CD8-positive, alpha-beta T cell (primary cell): ENCODE measurements at regions of chr17 and their contacts with region 1.

Region 1: GRCh38 chr17:4263282-4264215 is at the start of gene ANKFY1:
- DNase-seq: peak; percentile 95 to 98 (median 97)
- ATAC-seq: peak; percentile 95
- H3K4me3 ChIP-seq: peak within 1 kb of the TSS; percentile 86 to 99
- H3K4me3 Mint-ChIP-seq: peak within 1 kb of the TSS; percentile 90
- H3K27ac ChIP-seq: peak within 1 kb of the TSS; percentile 81 to 88
- H3K27ac Mint-ChIP-seq: peak within 1 kb of the TSS; percentile 91
- H3K4me1 ChIP-seq: peaks cover 21% of the 10 kb centered on the region
- H3K4me1 Mint-ChIP-seq: peaks cover 40% of the 10 kb centered on the region
- H3K27me3 ChIP-seq: no peaks in the 10 kb centered on the region
- H3K27me3 Mint-ChIP-seq: no peaks in the 10 kb centered on the region
- CTCF ChIP-seq: no peak
- total RNA-seq, gene ANKFY1: 26.2 to 28.6 TPM

Region 2: DNA sequence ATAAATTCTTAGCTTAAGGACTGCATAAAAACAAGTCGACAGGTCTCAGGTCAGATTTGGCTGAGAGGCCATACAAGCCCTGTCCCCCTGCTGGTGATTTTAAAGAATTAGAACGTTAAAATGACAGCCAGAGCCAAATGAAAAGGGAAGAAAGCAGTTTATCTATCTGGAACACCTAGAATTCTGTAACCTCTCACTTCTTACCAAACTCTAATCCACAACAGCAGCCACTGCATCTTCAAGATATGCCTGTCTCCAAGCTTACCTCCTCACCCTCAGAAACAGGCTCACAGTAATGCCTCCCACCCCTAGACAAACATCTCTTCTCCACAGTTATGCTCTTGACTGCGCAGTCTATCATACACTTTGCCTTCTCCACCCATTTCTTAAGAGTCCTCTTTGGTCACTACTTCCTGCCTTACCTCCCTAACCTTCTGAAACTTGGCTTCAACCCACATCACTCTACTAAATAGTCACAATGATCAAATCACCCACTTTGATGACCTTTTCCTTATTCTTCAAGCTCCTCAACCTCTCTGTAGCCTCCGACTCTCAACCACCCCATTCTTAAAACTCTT is 14.0 kb before region 1 on chr17:
- CTCF ChIA-PET with region 1: interaction called, 12 read pairs
- POLR2A ChIA-PET with region 1: interaction called, 9 read pairs
- intact Hi-C with region 1: no loop called
- DNase-seq: peak in 2 of 9 experiments; percentile 43 to 53
- ATAC-seq: peak; percentile 42
- H3K4me3 ChIP-seq: no peak overlapping the region
- H3K4me3 Mint-ChIP-seq: no peak overlapping the region
- H3K27ac ChIP-seq: no peak overlapping the region
- H3K27ac Mint-ChIP-seq: peak overlapping the region; percentile 7
- H3K4me1 ChIP-seq: peaks cover 6% of the 10 kb centered on the region
- H3K4me1 Mint-ChIP-seq: peaks cover 56% of the 10 kb centered on the region
- H3K27me3 ChIP-seq: no peaks in the 10 kb centered on the region
- H3K27me3 Mint-ChIP-seq: no peaks in the 10 kb centered on the region
- CTCF ChIP-seq: peak; percentile 58

Region 3: GRCh38 chr17:4554997-4555799 is 291.6 kb after region 1 on chr17 and contains the start of gene MYBBP1A:
- CTCF ChIA-PET with region 1: no interaction called
- POLR2A ChIA-PET with region 1: no interaction called
- intact Hi-C with region 1: loop called in 1 of 2 experiments (anchors 5 kb)
- DNase-seq: peak; percentile 91 to 99 (median 98)
- ATAC-seq: peak; percentile 93
- H3K4me3 ChIP-seq: peak within 1 kb of the TSS; percentile 80 to 100
- H3K4me3 Mint-ChIP-seq: peak within 1 kb of the TSS; percentile 94
- H3K27ac ChIP-seq: peak within 1 kb of the TSS; percentile 77 to 88
- H3K27ac Mint-ChIP-seq: peak within 1 kb of the TSS; percentile 95
- H3K4me1 ChIP-seq: peaks cover 26% of the 10 kb centered on the region
- H3K4me1 Mint-ChIP-seq: peaks cover 27% of the 10 kb centered on the region
- H3K27me3 ChIP-seq: no peaks in the 10 kb centered on the region
- H3K27me3 Mint-ChIP-seq: no peaks in the 10 kb centered on the region
- CTCF ChIP-seq: no peak
- total RNA-seq, gene MYBBP1A: 69.8 to 71.8 TPM